Motor neuron (in vitro differentiated cells): ENCODE measurements at regions of chrX and their contacts with region 1.

Region 1: DNA sequence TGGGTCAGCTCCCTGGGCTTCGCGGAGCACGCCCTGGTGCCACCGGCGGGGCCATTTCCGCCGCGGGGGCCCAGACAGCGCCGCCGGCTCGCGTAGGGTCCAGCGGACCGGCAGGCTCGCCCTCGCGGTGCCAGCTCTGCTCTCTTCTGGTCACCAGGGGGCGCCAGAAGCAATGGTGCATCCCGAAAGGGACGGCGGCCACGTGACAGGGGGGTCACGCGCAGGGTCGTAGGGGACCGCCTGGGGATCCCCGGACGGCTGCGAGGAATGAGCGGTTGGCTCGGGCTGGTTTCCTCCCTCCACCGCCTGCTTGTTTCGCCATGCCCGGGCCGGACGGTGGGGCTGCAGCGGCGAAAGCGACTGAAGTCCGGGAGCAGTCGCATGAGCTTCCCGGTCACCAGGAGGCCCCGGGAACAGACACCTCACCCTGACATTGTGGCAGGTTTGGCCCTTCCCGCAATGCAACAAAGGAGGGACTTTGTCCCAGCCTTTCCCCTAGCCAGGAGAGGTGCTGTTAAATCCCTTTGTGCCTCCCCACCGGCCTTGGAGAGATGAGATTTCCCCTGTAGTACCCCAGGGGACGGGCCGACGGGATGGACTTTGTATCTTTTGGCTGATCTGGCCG is 15.8 kb downstream of the ZCCHC12 start:
- ATAC-seq: peak; percentile 59 to 96 (median 86)
- H3K4me3 ChIP-seq: peak overlapping the region; percentile 8 to 26 (median 17)
- H3K27ac ChIP-seq: no peak overlapping the region
- H3K4me1 ChIP-seq: no peaks in the 10 kb centered on the region

Region 2: GRCh38 chrX:118216509-118216908 is 622.9 kb before region 1 on chrX:
- in situ Hi-C with region 1: no loop called
- ATAC-seq: peak in 5 of 8 experiments; percentile 77 to 85 (median 83)
- H3K4me3 ChIP-seq: no peak overlapping the region
- H3K27ac ChIP-seq: no peak overlapping the region
- H3K4me1 ChIP-seq: peaks cover 4 to 29% of the 10 kb centered on the region in 2 donors

Region 3: GRCh38 chrX:119004920-119005524 is 165.6 kb after region 1 on chrX:
- in situ Hi-C with region 1: loop called in 1 of 9 experiments (anchors 25 kb)
- ATAC-seq: peak in 7 of 8 experiments; percentile 45 to 93 (median 78)
- H3K4me3 ChIP-seq: no peak overlapping the region
- H3K27ac ChIP-seq: no peak overlapping the region
- H3K4me1 ChIP-seq: peaks cover 0 to 4% of the 10 kb centered on the region in 2 donors